PC-9 (cell line): ENCODE measurements at regions of chr6 and their contacts with region 1.

Region 1: DNA sequence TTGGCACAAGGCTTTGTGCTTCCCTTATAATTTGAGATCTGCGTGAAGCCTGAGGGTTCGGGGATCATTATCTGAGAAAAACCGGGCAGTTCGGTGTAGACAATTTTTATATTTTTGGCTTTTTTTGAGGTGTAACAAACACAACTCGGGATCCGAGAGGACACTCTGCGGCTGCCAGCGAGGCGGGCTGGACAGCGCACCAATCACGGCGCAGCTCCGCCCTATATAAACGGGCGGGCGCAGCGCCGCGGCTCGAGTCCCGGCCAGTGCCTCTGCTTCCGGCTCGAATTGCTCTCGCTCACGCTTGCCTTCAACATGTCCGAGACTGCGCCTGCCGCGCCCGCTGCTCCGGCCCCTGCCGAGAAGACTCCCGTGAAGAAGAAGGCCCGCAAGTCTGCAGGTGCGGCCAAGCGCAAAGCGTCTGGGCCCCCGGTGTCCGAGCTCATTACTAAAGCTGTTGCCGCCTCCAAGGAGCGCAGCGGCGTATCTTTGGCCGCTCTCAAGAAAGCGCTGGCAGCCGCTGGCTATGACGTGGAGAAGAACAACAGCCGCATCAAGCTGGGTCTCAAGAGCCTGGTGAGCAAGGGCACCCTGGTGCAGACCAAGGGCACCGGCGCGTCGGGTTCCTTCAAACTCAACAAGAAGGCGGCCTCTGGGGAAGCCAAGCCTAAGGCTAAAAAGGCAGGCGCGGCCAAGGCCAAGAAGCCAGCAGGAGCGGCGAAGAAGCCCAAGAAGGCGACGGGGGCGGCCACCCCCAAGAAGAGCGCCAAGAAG is 69.0 kb downstream of the HFE start:
- DNase-seq: peak; percentile 71 to 90
- H3K4me3 ChIP-seq: peak overlapping the region; percentile 87
- H3K27ac ChIP-seq: peak overlapping the region; percentile 85
- H3K4me1 ChIP-seq: peaks cover 14% of the 10 kb centered on the region
- H3K27me3 ChIP-seq: no peaks in the 10 kb centered on the region
- CTCF ChIP-seq: no peak; the same call in 1 of the 2 replicates

Region 2: DNA sequence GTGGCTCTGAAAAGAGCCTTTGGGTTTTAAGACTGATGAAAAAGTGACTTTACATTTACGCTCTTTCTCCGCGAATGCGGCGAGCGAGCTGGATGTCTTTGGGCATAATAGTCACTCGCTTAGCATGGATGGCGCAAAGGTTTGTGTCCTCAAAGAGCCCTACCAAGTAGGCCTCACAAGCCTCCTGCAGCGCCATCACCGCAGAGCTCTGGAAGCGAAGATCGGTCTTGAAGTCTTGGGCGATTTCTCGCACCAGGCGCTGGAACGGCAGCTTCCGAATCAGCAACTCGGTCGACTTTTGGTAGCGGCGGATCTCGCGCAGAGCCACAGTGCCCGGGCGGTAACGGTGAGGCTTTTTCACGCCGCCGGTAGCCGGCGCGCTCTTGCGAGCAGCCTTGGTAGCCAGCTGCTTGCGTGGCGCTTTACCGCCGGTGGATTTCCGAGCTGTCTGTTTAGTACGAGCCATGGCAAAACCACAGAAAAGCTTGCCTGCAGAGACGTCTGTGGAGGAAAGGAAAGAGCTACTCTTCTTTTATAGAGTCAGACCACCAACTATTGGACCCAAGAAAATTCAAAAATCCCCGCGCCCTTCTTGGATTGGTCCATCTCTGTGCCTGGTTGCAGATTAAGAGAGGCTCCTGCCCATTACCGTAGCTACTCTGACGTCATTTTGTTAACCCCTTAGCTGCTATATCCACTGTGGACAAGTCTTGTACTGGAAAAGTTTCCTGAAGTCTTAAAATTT is 124.5 kb before region 1 on chr6:
- CTCF ChIA-PET with region 1: no interaction called
- POLR2A ChIA-PET with region 1: interaction called, 56 read pairs
- intact Hi-C with region 1: loop called (anchors 2 kb)
- DNase-seq: peak; percentile 91 to 95
- H3K4me3 ChIP-seq: peak overlapping the region; percentile 81
- H3K27ac ChIP-seq: peak overlapping the region; percentile 79
- H3K4me1 ChIP-seq: peaks cover 46% of the 10 kb centered on the region
- H3K27me3 ChIP-seq: no peaks in the 10 kb centered on the region
- CTCF ChIP-seq: no peak

Region 3: GRCh38 chr6:26103770-26104456 is 52.4 kb before region 1 on chr6:
- CTCF ChIA-PET with region 1: no interaction called
- POLR2A ChIA-PET with region 1: interaction called, 33 read pairs
- intact Hi-C with region 1: loop called (anchors 1 kb)
- DNase-seq: peak; percentile 87
- H3K4me3 ChIP-seq: peak overlapping the region; percentile 65
- H3K27ac ChIP-seq: peak overlapping the region; percentile 78
- H3K4me1 ChIP-seq: peaks cover 27% of the 10 kb centered on the region
- H3K27me3 ChIP-seq: no peaks in the 10 kb centered on the region
- CTCF ChIP-seq: peak; percentile 68

Region 4: DNA sequence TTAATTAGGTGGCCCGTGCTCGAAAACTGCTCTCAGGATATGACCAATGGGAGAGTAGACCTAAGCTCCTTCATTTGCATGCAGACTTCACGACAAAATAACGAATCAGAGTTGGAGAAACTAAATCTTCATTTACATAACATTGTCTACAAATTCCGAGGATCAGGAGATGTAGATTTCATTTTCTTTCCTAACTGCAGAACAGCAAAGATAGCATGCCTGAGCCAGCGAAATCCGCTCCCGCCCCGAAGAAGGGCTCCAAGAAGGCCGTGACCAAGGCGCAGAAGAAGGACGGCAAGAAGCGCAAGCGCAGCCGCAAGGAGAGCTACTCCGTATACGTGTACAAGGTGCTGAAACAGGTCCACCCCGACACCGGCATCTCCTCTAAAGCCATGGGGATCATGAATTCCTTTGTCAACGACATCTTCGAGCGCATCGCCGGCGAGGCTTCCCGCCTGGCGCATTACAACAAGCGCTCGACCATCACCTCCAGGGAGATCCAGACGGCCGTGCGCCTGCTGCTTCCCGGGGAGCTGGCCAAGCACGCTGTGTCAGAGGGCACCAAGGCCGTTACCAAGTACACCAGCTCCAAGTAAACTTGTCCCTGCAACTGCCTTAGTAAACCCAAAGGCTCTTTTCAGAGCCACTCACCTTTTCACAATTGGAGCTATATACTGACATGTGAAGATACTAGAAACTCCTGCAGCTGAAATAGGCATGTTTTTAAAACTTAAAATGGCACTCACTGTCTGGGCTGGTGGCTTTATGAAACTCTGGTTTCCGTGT is 27.5 kb after region 1 on chr6:
- CTCF ChIA-PET with region 1: no interaction called
- POLR2A ChIA-PET with region 1: interaction called, 16 read pairs
- intact Hi-C with region 1: no loop called
- DNase-seq: peak; percentile 72 to 87
- H3K4me3 ChIP-seq: peak overlapping the region; percentile 54
- H3K27ac ChIP-seq: peak overlapping the region; percentile 65
- H3K4me1 ChIP-seq: peaks cover 12% of the 10 kb centered on the region; the same call in 1 of the 2 replicates
- H3K27me3 ChIP-seq: no peaks in the 10 kb centered on the region
- CTCF ChIP-seq: no peak

Region 5: GRCh38 chr6:26216356-26216885 is 60.2 kb after region 1 on chr6:
- CTCF ChIA-PET with region 1: no interaction called
- POLR2A ChIA-PET with region 1: interaction called, 24 read pairs
- intact Hi-C with region 1: loop called (anchors 1 kb)
- DNase-seq: peak; percentile 65 to 95
- H3K4me3 ChIP-seq: peak overlapping the region; percentile 72
- H3K27ac ChIP-seq: peak overlapping the region; percentile 80
- H3K4me1 ChIP-seq: 0 out of 2 replicates have a peak, but pooled peaks cover 14% of the 10 kb centered on the region
- H3K27me3 ChIP-seq: no peaks in the 10 kb centered on the region
- CTCF ChIP-seq: no peak

Region 6: DNA sequence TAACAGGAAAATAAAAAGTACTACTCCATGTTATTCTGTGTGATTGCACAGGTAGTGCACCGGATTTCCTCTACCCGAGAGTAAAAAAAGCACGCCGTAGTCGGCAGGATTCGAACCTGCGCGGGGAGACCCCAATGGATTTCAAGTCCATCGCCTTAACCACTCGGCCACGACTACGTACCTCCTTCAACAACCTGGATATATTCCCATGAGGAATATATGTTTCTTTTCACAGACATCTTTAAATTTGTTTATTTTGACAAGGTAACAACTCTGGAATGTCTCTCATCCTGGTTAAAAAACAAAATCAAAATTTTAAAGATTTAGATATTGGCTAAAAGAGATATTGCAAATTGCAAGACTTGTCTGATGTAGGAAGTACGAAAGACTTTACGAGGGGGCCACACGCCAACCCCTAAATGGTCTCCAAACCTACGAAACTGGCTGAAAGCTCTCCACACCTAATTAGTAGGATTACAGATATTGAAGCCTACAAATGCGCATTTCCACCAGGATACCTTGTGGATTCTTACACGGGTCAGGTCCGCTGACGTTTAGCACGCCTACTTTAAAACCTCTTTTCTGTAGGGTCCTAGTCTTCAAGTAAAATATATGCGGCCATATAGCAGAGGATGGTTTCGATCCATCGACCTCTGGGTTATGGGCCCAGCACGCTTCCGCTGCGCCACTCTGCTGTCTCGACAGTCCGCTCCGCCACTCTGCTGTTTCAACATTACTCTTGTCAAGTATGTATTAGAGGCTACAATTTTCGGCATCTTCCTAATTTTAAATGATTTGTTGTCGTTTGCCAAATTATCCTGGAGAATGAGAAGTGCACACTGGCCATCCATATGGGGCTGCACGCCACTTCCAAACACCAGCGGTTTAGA is 156.5 kb after region 1 on chr6:
- CTCF ChIA-PET with region 1: no interaction called
- POLR2A ChIA-PET with region 1: interaction called, 17 read pairs
- intact Hi-C with region 1: no loop called
- DNase-seq: peak; percentile 74 to 77
- H3K4me3 ChIP-seq: peak overlapping the region; percentile 69
- H3K27ac ChIP-seq: peak overlapping the region; percentile 74
- H3K4me1 ChIP-seq: peaks cover 13% of the 10 kb centered on the region
- H3K27me3 ChIP-seq: no peaks in the 10 kb centered on the region
- CTCF ChIP-seq: no peak

Region 7: DNA sequence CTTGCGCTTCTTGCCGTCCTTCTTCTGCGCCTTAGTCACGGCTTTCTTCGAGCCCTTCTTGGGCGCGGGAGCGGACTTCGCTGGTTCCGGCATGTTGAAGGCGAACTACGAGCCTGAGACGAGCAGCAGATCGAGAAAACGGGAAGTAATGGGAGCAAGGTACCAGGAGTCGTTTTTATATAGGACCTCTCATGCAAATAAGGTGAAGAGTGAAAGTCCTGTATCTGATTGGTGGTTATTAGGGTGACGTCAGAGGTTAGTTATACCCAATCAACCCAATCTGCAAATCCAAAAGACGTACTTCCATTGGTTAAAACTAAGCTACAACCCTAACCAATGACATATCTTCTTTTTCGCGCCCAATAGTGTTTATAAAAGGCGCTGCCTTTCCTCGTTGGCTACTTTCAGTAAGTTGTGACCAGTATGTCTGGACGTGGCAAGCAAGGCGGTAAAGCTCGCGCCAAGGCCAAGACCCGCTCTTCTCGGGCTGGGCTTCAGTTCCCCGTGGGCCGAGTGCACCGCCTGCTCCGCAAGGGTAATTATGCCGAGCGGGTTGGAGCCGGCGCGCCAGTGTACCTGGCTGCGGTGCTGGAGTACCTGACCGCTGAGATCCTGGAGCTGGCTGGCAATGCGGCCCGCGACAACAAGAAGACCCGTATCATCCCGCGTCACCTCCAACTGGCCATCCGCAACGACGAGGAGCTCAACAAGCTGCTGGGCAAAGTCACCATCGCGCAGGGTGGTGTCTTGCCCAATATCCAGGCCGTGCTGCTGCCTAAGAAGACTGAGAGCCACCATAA is 990.6 kb after region 1 on chr6:
- CTCF ChIA-PET with region 1: no interaction called
- POLR2A ChIA-PET with region 1: interaction called, 10 read pairs
- intact Hi-C with region 1: no loop called
- DNase-seq: peak; percentile 89 to 98
- H3K4me3 ChIP-seq: peak overlapping the region; percentile 91
- H3K27ac ChIP-seq: peak overlapping the region; percentile 75
- H3K4me1 ChIP-seq: peaks cover 2% of the 10 kb centered on the region; the same call in 1 of the 2 replicates
- H3K27me3 ChIP-seq: no peaks in the 10 kb centered on the region
- CTCF ChIP-seq: no peak